Activated B cell treated with CpG ODN at 0.5 μM for 24 hours (primary cell): ENCODE measurements at regions of chr15 and their contacts with region 1.

Region 1: DNA sequence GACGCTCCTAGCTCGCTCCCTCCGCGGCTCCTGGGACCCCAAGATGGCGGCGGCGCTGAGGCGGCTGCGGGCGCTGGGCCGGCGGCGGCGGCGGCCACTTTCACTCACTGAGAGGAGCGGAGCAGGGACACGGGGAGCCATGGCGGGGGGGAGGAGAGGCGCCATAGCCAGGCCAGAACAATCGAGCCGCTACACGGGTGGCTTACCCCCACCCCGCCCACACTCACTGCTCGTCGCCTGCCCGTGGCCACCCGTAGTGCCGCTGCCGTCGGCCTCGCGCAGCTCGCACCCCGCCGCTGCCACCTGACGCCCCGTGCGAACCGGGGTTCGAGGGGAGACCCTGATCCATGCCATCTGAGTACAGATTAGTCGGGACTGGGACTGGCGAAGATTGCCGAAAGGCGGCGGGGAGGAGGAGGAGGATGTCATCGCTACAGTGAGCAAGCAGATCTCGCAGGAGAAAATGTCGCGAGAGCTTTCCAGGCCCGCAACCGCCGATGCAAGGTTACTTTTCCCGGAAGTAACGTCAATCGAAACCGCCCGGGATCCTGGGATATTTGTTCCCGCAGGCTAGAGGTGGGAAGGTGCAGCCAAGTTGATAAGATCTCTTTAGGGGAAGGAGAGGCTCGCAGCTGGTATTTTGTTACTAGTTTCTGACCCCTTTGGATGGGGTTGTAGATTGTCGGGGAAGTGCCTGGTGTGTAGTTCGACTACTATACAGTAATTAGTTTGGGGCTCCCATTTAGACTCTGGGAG is at the start of gene INO80:
- DNase-seq: peak; percentile 93
- ATAC-seq: peak; percentile 70
- H3K4me3 Mint-ChIP-seq: peak within 1 kb of the TSS; percentile 97
- H3K27ac Mint-ChIP-seq: peak within 1 kb of the TSS; percentile 100
- H3K4me1 Mint-ChIP-seq: peaks cover 32% of the 10 kb centered on the region
- H3K27me3 Mint-ChIP-seq: no peaks in the 10 kb centered on the region
- CTCF ChIP-seq: no peak
- total RNA-seq, gene INO80: 34.8 and 38.8 TPM in 2 replicates

Region 2: GRCh38 chr15:40694688-40695468 is 421.4 kb before region 1 on chr15 and contains the start of gene RAD51:
- CTCF ChIA-PET with region 1: no interaction called
- POLR2A ChIA-PET with region 1: interaction called, 4 read pairs
- intact Hi-C with region 1: loop called (anchors 2 kb)
- DNase-seq: peak; percentile 88
- ATAC-seq: peak; percentile 90
- H3K4me3 Mint-ChIP-seq: peak within 1 kb of the TSS; percentile 99
- H3K27ac Mint-ChIP-seq: peak within 1 kb of the TSS; percentile 98
- H3K4me1 Mint-ChIP-seq: peaks cover 25% of the 10 kb centered on the region
- H3K27me3 Mint-ChIP-seq: no peaks in the 10 kb centered on the region
- CTCF ChIP-seq: no peak
- total RNA-seq, gene RAD51: 2.6 and 4.1 TPM in 2 replicates

Region 3: GRCh38 chr15:40893733-40894688 is 222.3 kb before region 1 on chr15 and contains the start of gene VPS18:
- CTCF ChIA-PET with region 1: no interaction called
- POLR2A ChIA-PET with region 1: interaction called, 9 read pairs
- intact Hi-C with region 1: loop called (anchors 5 kb)
- DNase-seq: peak; percentile 99
- ATAC-seq: peak; percentile 98
- H3K4me3 Mint-ChIP-seq: peak within 1 kb of the TSS; percentile 98
- H3K27ac Mint-ChIP-seq: peak within 1 kb of the TSS; percentile 90
- H3K4me1 Mint-ChIP-seq: peaks cover 34% of the 10 kb centered on the region
- H3K27me3 Mint-ChIP-seq: no peaks in the 10 kb centered on the region
- CTCF ChIP-seq: peak; percentile 94
- total RNA-seq, gene VPS18: 25.3 and 26.2 TPM in 2 replicates

Region 4: DNA sequence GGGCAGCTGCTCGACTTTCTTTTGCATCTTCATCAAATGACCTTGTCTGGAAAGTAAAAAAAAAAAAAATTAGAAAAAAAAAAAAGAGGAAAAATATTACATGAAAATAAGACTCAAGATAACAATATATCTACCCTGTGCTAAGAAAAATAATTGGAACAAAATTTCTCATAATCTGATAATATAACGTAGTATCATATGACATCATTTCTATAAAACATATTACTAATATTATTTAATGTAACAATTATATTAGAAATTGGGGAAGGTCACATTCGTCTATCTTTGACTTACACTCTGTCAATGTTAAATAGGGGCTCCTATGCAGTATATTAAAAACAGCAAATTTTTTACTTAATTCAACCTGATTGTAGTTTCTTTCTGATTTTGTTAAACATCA is 44.3 kb before region 1 on chr15:
- CTCF ChIA-PET with region 1: no interaction called
- POLR2A ChIA-PET with region 1: no interaction called
- intact Hi-C with region 1: no loop called
- DNase-seq: no peak
- ATAC-seq: no peak
- H3K4me3 Mint-ChIP-seq: no peak overlapping the region
- H3K27ac Mint-ChIP-seq: no peak overlapping the region
- H3K4me1 Mint-ChIP-seq: no peaks in the 10 kb centered on the region
- H3K27me3 Mint-ChIP-seq: no peaks in the 10 kb centered on the region
- CTCF ChIP-seq: no peak

Region 5: DNA sequence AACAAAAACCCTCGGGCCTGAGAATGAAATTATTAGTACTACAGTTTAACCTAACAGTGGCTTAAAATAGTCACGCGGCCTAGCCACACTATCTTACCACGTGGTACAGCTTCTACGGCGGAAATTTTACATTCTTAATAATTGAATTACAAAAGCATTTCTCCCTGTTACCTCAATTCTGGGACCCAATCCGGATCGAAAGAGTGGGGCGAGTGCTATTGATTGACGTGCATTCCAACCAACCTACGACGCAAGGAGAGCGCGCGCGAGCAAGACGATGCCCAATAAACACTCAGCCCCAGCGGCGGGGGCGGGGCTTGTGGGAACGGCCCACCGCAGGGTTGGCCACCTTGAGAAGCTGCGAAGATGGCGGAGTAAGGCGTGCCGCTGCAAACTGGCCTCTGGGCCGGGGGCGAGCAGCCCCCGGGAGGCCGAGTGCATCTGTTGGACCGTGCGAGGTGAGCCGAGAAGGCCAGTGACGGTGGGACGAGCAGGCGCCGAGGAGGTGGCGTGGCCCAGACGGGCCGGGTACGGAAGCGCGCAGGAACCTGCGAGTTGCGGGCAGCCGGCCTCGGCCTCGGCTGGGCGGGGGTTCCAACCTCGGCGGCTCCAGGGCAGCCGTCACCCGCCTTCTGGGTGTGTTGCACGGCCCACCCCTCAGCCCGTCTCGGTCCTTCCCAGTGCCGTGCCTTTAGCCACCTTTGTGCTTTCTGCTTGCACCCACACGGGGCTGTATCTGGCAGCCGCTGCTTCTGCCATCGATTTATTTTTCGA is 167.5 kb after region 1 on chr15:
- CTCF ChIA-PET with region 1: no interaction called
- POLR2A ChIA-PET with region 1: interaction called, 7 read pairs
- intact Hi-C with region 1: loop called (anchors 1 kb)
- DNase-seq: peak; percentile 94
- ATAC-seq: peak; percentile 98
- H3K4me3 Mint-ChIP-seq: peak overlapping the region; percentile 93
- H3K27ac Mint-ChIP-seq: peak overlapping the region; percentile 94
- H3K4me1 Mint-ChIP-seq: peaks cover 42% of the 10 kb centered on the region
- H3K27me3 Mint-ChIP-seq: no peaks in the 10 kb centered on the region
- CTCF ChIP-seq: no peak

Region 6: GRCh38 chr15:41416742-41417406 is 300.6 kb after region 1 on chr15 and contains the start of gene RTF1:
- CTCF ChIA-PET with region 1: no interaction called
- POLR2A ChIA-PET with region 1: no interaction called
- intact Hi-C with region 1: loop called (anchors 1 kb)
- DNase-seq: peak; percentile 100
- ATAC-seq: peak; percentile 96
- H3K4me3 Mint-ChIP-seq: peak within 1 kb of the TSS; percentile 95
- H3K27ac Mint-ChIP-seq: peak within 1 kb of the TSS; percentile 92
- H3K4me1 Mint-ChIP-seq: peaks cover 43% of the 10 kb centered on the region
- H3K27me3 Mint-ChIP-seq: no peaks in the 10 kb centered on the region
- CTCF ChIP-seq: no peak
- total RNA-seq, gene RTF1: 37.2 and 38.0 TPM in 2 replicates